ENCODE measurements at regions of chr6 and their contacts with region 1.

Region 1: GRCh38 chr6:136226027-136226673 is 24.0 kb downstream of the MTFR2 start:
- DNase-seq: peak; percentile 36 to 89
- H3K4me3 ChIP-seq: no peak overlapping the region
- CTCF ChIP-seq: peak; percentile 78 to 99 (median 82)
- POLR2A ChIP-seq: no peak

Region 2: DNA sequence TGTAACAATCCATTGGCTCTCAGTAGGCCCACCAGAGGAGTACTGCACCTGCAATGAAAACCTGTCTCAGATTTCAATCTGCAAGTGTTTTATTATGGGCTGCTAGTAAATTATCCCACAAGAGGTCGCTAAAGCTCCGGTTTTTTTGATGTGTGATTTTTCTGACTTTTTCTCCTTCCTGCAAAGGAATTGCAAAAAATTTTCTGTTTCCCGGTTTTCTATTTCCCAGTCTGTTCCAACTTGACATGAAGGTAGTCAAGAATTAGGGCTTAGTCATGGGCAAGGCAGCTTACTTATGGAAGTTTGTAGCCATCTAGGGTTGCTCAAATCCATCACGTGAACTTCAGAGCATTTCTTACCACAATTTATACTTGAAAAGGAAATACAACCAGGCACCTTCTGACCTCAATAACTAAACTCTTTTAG is 690.1 kb before region 1 on chr6:
- intact Hi-C with region 1: loop called (anchors 10 kb)
- DNase-seq: no peak
- H3K4me3 ChIP-seq: no peak overlapping the region
- CTCF ChIP-seq: no peak
- POLR2A ChIP-seq: no peak

Region 3: GRCh38 chr6:136403166-136403980 is 177.2 kb after region 1 on chr6:
- intact Hi-C with region 1: no loop called
- DNase-seq: peak in 1 of 2 donors; percentile 26
- H3K4me3 ChIP-seq: no peak overlapping the region
- CTCF ChIP-seq: no peak
- POLR2A ChIP-seq: no peak

Measured in lower leg skin (tissue), 4 donors.